Esophagus muscularis mucosa (tissue), 4 donors: ENCODE measurements at regions of chr15 and their contacts with region 1.

Region 1: GRCh38 chr15:85730001-85730820 is 64.5 kb downstream of the KLHL25 start:
- DNase-seq: no peak
- H3K4me3 ChIP-seq: no peak overlapping the region
- H3K27ac ChIP-seq: peak overlapping the region; percentile 82 to 88 (median 86)
- H3K4me1 ChIP-seq: peaks cover 24 to 55% (median 53%) of the 10 kb centered on the region in 4 donors
- H3K27me3 ChIP-seq: no peaks in the 10 kb centered on the region
- CTCF ChIP-seq: peak; percentile 77 to 83 (median 81)
- EP300 ChIP-seq: no peak
- POLR2A ChIP-seq: no peak

Region 2: DNA sequence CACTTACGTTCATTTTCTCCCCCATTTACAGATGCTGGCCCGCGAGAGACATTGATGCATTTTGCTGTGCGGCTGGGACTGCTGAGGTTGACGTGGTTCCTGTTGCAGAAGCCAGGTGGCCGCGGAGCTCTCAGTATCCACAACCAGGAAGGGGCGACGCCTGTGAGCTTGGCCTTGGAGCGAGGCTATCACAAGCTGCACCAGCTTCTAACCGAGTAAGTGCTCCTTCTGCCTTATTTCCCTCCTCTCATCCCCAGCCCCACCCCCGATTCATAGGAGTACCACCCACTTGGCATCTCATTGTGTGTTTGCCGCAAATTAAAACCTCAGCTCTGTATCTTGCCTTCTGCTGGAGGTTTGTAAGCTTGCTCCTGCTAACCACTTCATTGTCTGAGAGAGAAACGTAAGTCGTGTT is 186.5 kb before region 1 on chr15:
- intact Hi-C with region 1: no loop called
- DNase-seq: peak; percentile 93
- H3K4me3 ChIP-seq: peak overlapping the region; percentile 3 to 37 (median 15)
- H3K27ac ChIP-seq: peak overlapping the region; percentile 65 to 77 (median 70)
- H3K4me1 ChIP-seq: peaks cover 50 to 86% (median 66%) of the 10 kb centered on the region in 4 donors
- H3K27me3 ChIP-seq: no peaks in the 10 kb centered on the region
- CTCF ChIP-seq: peak; percentile 24 to 28 (median 28)
- EP300 ChIP-seq: no peak
- POLR2A ChIP-seq: peak; percentile 36

Region 3: DNA sequence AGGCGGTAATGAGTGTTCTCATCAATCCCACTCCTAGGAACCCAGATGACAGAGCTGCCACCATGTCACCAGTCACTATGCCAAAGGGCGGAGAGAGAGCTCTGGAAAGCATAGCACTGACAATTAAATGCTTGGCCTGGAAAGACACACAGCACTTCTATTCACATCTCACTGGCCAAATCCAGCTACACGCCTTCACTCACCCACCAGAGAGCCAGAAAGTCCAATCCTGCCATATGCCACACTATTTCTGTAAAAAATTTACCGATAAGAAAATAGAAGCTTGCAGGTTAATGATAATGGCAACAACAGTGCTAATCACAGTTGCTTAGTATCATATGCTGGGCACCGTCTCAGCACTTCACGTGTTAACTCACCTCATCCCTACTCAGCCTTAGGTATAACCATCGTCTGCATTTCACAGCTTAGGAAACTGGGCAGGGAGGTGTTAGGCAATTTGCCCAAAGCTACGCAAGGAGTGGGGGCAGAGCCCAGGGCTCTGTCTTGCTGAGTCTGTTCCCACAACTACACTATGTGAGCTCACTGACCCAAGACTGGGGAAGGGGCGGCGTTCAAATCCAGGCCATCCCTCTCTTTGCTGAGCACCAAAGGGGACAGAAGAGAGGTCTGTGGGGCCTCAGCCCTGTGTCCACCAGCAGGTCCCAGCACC is 48.0 kb after region 1 on chr15:
- intact Hi-C with region 1: no loop called
- DNase-seq: no peak
- H3K4me3 ChIP-seq: no peak overlapping the region
- H3K27ac ChIP-seq: no peak overlapping the region
- H3K4me1 ChIP-seq: peaks cover 22 to 45% (median 33%) of the 10 kb centered on the region in 4 donors
- H3K27me3 ChIP-seq: no peaks in the 10 kb centered on the region
- CTCF ChIP-seq: no peak
- EP300 ChIP-seq: no peak
- POLR2A ChIP-seq: no peak

Region 4: GRCh38 chr15:85831415-85832113 is 101.4 kb after region 1 on chr15:
- intact Hi-C with region 1: loop called (anchors 2 kb)
- DNase-seq: no peak
- H3K4me3 ChIP-seq: no peak overlapping the region
- H3K27ac ChIP-seq: no peak overlapping the region
- H3K4me1 ChIP-seq: peaks cover 0 to 6% (median 4%) of the 10 kb centered on the region in 4 donors
- H3K27me3 ChIP-seq: no peaks in the 10 kb centered on the region
- CTCF ChIP-seq: peak; percentile 70 to 75 (median 74)
- EP300 ChIP-seq: no peak
- POLR2A ChIP-seq: no peak

Region 5: DNA sequence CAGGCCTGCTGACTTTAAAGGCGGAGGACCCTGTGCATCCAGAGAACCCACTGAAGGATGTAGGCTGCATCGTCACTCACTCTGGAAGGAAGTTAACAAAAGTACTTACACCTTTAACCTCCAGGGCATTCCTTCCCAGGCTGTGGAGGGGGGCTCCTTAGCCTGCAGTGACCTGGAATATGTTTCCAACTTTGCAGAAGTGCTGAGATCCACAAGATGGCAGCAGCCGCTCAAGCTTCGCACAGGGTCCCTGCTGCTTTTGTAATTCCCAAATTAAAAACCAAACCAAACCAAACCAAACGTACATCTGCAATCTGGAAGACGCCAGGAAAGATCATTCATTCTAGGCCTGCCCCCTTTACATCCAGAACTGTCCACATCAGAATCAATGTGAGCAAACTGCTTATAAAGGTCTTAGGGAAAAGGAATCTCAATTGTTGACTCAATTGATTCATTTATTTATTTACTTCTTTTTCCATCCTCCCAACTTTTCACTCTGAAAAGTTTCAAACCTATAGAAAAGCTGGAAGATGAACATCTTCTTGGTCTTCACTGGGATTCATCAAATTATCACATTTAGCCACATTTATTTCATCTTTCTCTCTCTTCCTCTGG is 135.0 kb after region 1 on chr15:
- intact Hi-C with region 1: no loop called
- DNase-seq: no peak
- H3K4me3 ChIP-seq: no peak overlapping the region
- H3K27ac ChIP-seq: no peak overlapping the region
- H3K4me1 ChIP-seq: no peaks in the 10 kb centered on the region
- H3K27me3 ChIP-seq: peaks cover 0 to 2% (median 0%) of the 10 kb centered on the region in 4 donors
- CTCF ChIP-seq: peak; percentile 44 to 52 (median 47)
- EP300 ChIP-seq: no peak
- POLR2A ChIP-seq: no peak